Thyroid gland (tissue), 4 donors: ENCODE measurements at regions of chr11 and their contacts with region 1.

Region 1: GRCh38 chr11:5808500-5809121 is at the start of gene OR52N2:
- DNase-seq: peak; percentile 61 to 76
- H3K4me3 ChIP-seq: peak within 1 kb of the TSS in 2 of 3 donors; percentile 9
- H3K27ac ChIP-seq: no peak within 1 kb of the TSS
- H3K4me1 ChIP-seq: no peaks in the 10 kb centered on the region
- H3K27me3 ChIP-seq: no peaks in the 10 kb centered on the region
- CTCF ChIP-seq: peak in 5 of 6 experiments; percentile 49 to 86 (median 81)
- POLR2A ChIP-seq: no peak
- total RNA-seq, gene OR52N2: not detected

Region 2: GRCh38 chr11:5123802-5124521 is 684.6 kb before region 1 on chr11:
- intact Hi-C with region 1: loop called (anchors 10 kb)
- DNase-seq: peak; percentile 51 to 67
- H3K4me3 ChIP-seq: no peak overlapping the region
- H3K27ac ChIP-seq: no peak overlapping the region
- H3K4me1 ChIP-seq: no peaks in the 10 kb centered on the region
- H3K27me3 ChIP-seq: no peaks in the 10 kb centered on the region
- CTCF ChIP-seq: peak; percentile 39 to 76 (median 56)
- POLR2A ChIP-seq: no peak

Region 3: GRCh38 chr11:5476184-5476819 is 332.3 kb before region 1 on chr11:
- intact Hi-C with region 1: loop called (anchors 5 kb)
- DNase-seq: peak; percentile 27 to 45
- H3K4me3 ChIP-seq: no peak overlapping the region
- H3K27ac ChIP-seq: no peak overlapping the region
- H3K4me1 ChIP-seq: no peaks in the 10 kb centered on the region
- H3K27me3 ChIP-seq: no peaks in the 10 kb centered on the region
- CTCF ChIP-seq: peak; percentile 12 to 67 (median 58)
- POLR2A ChIP-seq: no peak